ENCODE measurements at regions of chr6 and their contacts with region 1.

Region 1: GRCh38 chr6:56292505-56293181 is 45.3 kb upstream of the COL21A1 start:
- DNase-seq: peak; percentile 11
- H3K4me3 Mint-ChIP-seq: no peak overlapping the region
- H3K27ac Mint-ChIP-seq: no peak overlapping the region
- H3K4me1 Mint-ChIP-seq: no peaks in the 10 kb centered on the region
- H3K27me3 Mint-ChIP-seq: no peaks in the 10 kb centered on the region

Region 2: DNA sequence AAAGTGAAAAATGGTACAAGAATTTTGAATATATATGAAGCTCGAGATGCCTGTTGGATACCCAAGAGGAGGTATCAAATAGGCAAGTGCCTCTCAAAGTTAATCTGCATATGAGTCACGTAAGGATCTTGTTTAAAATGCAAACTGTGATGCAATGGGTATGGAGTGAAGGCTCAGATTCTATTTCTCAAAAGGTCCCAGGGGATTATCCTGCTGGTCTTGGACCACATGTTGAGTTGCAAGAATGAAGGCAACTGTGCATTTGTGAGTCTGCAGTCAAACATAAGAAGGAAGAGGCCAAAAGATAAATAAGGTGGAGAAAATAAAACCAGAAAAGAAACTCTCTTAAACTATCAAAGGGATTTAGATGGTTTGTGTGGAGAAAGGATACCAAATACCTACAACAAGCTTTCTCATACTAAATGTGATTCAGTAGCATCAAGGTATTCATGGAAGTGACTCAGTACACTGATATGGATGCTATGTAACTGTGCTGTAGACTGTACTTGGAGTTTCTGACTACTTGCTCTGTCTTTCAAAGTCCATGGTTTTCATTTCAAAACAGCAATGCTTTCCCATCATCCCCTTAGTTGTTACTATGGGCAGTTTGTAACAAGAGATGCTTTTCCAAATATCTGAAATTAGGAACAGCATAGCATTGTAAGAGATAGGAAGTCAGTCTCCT is 859.1 kb before region 1 on chr6:
- CTCF ChIA-PET with region 1: no interaction called
- intact Hi-C with region 1: no loop called
- DNase-seq: no peak
- H3K4me3 Mint-ChIP-seq: no peak overlapping the region
- H3K27ac Mint-ChIP-seq: no peak overlapping the region
- H3K4me1 Mint-ChIP-seq: no peaks in the 10 kb centered on the region
- H3K27me3 Mint-ChIP-seq: no peaks in the 10 kb centered on the region

Region 3: GRCh38 chr6:55445648-55446204 is 846.9 kb before region 1 on chr6:
- CTCF ChIA-PET with region 1: no interaction called
- intact Hi-C with region 1: loop called (anchors 2 kb)
- DNase-seq: no peak
- H3K4me3 Mint-ChIP-seq: no peak overlapping the region
- H3K27ac Mint-ChIP-seq: no peak overlapping the region
- H3K4me1 Mint-ChIP-seq: no peaks in the 10 kb centered on the region
- H3K27me3 Mint-ChIP-seq: no peaks in the 10 kb centered on the region

Region 4: GRCh38 chr6:56335726-56336125 is 43.1 kb after region 1 on chr6:
- CTCF ChIA-PET with region 1: no interaction called
- intact Hi-C with region 1: no loop called
- DNase-seq: no peak
- H3K4me3 Mint-ChIP-seq: no peak overlapping the region
- H3K27ac Mint-ChIP-seq: no peak overlapping the region
- H3K4me1 Mint-ChIP-seq: no peaks in the 10 kb centered on the region
- H3K27me3 Mint-ChIP-seq: peaks cover 17% of the 10 kb centered on the region

Measured in activated naive CD4-positive, alpha-beta T cell treated with anti-CD3 and anti-CD28 coated beads for 36 hours (primary cell).